Colonic mucosa (tissue), 4 donors: ENCODE measurements at regions of chr14 and their contacts with region 1.

Region 1: DNA sequence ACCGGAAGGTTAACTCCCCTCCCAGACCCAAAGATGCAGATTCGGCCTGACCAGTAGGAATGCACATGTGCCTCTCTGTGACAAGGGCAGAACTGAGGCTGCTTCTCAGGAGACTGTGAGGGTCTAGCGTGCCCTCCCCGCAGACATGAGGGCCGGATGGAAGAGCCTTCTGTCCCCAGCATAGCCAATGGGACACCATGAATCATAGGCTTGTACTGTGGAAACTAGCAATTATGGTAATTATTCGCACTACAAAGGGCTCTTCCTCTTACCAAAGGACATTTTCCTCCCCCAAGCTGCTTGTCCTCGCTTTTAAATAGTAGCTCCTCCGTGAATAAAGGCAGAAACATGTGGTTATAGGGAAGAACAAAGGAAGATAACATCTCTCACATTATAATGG is 6.2 kb downstream of the COA8 start:
- DNase-seq: no peak
- H3K4me3 ChIP-seq: no peak overlapping the region
- H3K27ac ChIP-seq: no peak overlapping the region
- H3K4me1 ChIP-seq: no peaks in the 10 kb centered on the region
- H3K27me3 ChIP-seq: no peaks in the 10 kb centered on the region
- CTCF ChIP-seq: no peak

Region 2: GRCh38 chr14:103628684-103629502 is 59.9 kb after region 1 on chr14 and contains the start of gene KLC1:
- intact Hi-C with region 1: loop called (anchors 5 kb)
- DNase-seq: peak; percentile 90
- H3K4me3 ChIP-seq: peak within 1 kb of the TSS; percentile 98
- H3K27ac ChIP-seq: peak within 1 kb of the TSS; percentile 95
- H3K4me1 ChIP-seq: peaks cover 7% of the 10 kb centered on the region
- H3K27me3 ChIP-seq: no peaks in the 10 kb centered on the region
- CTCF ChIP-seq: no peak
- total RNA-seq, gene KLC1: 78.1 to 112 TPM

Region 3: DNA sequence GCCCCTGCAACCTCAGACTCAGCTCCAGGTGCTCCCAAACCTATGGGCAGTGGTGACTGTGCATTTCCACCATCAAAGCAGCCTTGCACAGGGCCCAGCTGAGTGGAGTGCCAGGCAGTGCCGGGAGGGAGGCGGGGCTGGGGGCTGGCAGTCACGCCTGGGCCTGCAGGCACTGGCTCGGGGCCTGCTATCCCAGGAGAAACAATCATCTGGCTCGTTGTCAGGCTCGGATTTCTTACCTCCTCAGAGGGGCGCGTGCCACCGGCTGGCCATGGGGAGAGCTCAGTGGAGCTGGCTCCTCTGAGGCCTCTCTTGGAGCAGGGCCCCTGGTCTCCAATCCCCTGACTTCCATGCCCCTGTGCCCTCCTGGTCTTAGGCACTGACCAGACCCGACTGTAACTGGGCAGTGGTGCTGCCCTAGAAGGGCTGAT is 298.6 kb after region 1 on chr14:
- intact Hi-C with region 1: no loop called
- DNase-seq: no peak
- H3K4me3 ChIP-seq: no peak overlapping the region
- H3K27ac ChIP-seq: no peak overlapping the region
- H3K4me1 ChIP-seq: peaks cover 1% of the 10 kb centered on the region
- H3K27me3 ChIP-seq: no peaks in the 10 kb centered on the region
- CTCF ChIP-seq: no peak